ENCODE measurements at regions of chr14 and their contacts with region 1.

Region 1: GRCh38 chr14:73759714-73760597 is 45.8 kb upstream of the PNMA1 start:
- DNase-seq: peak; percentile 99
- ATAC-seq: peak; percentile 75
- H3K4me3 Mint-ChIP-seq: peak overlapping the region; percentile 87
- H3K27ac Mint-ChIP-seq: peak overlapping the region; percentile 96
- H3K4me1 Mint-ChIP-seq: peaks cover 72% of the 10 kb centered on the region
- H3K27me3 Mint-ChIP-seq: no peaks in the 10 kb centered on the region
- CTCF ChIP-seq: no peak

Region 2: GRCh38 chr14:73700325-73700724 is 59.6 kb before region 1 on chr14:
- CTCF ChIA-PET with region 1: no interaction called
- POLR2A ChIA-PET with region 1: no interaction called
- intact Hi-C with region 1: no loop called
- DNase-seq: no peak
- ATAC-seq: no peak
- H3K4me3 Mint-ChIP-seq: no peak overlapping the region
- H3K27ac Mint-ChIP-seq: no peak overlapping the region
- H3K4me1 Mint-ChIP-seq: peaks cover 30% of the 10 kb centered on the region
- H3K27me3 Mint-ChIP-seq: no peaks in the 10 kb centered on the region
- CTCF ChIP-seq: no peak

Region 3: DNA sequence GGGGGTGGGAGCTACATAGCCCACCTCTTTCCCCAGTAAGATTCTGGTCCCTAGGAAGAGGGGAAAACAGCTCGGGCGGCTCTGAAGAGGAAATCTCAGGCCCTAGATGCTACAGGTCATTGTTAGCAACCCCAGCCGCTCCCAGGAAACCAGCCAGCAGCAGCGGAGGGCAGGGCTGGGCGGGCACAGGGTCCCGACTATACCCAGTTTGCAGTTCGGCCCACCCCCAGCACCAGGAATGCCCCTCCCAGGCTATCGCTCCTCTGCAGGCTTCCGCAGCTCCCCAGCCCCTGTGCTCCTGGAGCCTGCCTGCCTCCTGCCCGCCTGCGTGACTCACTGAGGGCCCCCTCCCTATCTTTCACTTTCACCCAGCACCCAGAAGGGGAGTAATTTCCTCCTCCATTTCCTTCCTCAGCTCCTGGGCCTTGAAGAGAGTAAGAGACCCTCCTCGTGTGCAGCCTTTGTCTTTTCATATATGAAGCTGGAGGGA is 18.5 kb before region 1 on chr14:
- CTCF ChIA-PET with region 1: interaction called, 123 read pairs
- POLR2A ChIA-PET with region 1: interaction called, 236 read pairs
- intact Hi-C with region 1: loop called (anchors 2 kb)
- DNase-seq: peak; percentile 83
- ATAC-seq: peak; percentile 73
- H3K4me3 Mint-ChIP-seq: peak overlapping the region; percentile 74
- H3K27ac Mint-ChIP-seq: peak overlapping the region; percentile 98
- H3K4me1 Mint-ChIP-seq: peaks cover 71% of the 10 kb centered on the region
- H3K27me3 Mint-ChIP-seq: no peaks in the 10 kb centered on the region
- CTCF ChIP-seq: no peak

Region 4: DNA sequence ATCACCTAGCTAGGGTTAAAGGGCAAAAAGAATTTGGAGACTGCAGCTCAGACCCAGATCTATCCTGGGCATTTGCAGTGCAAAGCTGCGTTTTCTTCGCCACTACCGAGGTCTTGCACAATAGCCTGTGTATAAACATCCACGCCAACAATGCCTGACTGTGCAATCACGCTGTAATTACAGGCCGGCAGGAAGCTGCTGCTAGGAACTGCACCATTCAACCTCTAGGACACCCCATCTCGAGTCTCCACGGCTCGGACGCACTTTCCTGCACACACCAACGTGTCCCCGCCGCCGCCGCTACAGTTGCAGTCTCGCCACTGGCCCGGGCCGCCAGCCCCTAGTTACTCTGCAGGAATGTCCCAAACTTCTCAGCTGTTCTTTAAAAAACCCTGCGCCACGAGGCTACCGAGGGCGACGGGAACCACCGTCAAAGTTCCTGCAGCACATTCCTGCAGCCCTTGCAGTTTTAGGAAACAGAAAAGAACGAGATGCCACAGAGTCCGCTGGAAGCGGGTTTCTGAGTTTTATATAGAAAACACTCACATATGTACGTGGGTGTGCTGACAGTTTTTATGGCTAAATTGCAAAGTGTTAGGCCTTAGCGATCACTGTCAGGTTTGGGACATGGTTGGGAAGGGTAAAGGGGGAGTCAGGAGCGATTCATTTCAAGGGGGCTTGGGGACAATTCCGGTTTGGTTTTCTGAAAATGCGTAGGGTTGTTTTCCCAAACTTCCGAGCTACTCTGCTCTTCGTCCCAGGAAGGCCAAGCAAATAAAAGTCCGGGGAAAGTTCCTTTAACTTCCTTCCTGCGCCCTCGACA is 26.1 kb after region 1 on chr14:
- CTCF ChIA-PET with region 1: interaction called, 84 read pairs
- POLR2A ChIA-PET with region 1: interaction called, 512 read pairs
- intact Hi-C with region 1: loop called (anchors 2 kb)
- DNase-seq: peak; percentile 81
- ATAC-seq: peak; percentile 54
- H3K4me3 Mint-ChIP-seq: peak overlapping the region; percentile 90
- H3K27ac Mint-ChIP-seq: peak overlapping the region; percentile 95
- H3K4me1 Mint-ChIP-seq: peaks cover 58% of the 10 kb centered on the region
- H3K27me3 Mint-ChIP-seq: no peaks in the 10 kb centered on the region
- CTCF ChIP-seq: peak; percentile 37

Region 5: DNA sequence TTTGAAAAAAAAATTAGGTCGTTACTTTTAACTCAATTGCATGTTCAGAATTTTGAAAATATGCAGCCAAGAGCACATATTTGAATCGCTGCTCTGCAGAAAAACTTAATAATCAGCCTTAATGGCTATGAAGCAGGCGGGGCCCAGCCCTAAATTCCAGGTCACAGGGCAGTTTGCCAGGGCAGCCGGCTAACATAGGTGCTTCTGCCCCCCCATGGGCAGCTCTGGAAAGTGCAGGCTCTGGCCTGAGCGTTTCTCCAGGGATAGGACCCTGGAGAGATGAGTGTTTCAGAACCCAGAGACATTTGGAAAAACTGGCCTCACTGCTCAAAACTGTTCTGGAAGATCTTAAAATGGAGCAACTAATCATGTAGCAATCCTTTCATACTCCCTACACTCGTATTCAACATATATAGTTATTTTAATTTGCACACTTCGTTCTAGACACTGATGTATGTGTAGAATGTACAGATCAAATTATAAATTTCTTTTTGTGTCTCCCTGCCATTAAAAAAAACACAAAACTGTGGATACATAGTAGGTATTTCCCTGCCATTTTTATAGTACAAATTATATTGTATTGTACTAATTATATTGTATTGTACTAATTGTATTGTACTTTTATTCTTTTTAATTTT is 65.7 kb after region 1 on chr14:
- CTCF ChIA-PET with region 1: interaction called, 23 read pairs
- POLR2A ChIA-PET with region 1: interaction called, 3 read pairs
- intact Hi-C with region 1: no loop called
- DNase-seq: peak; percentile 88
- ATAC-seq: peak; percentile 85
- H3K4me3 Mint-ChIP-seq: no peak overlapping the region
- H3K27ac Mint-ChIP-seq: no peak overlapping the region
- H3K4me1 Mint-ChIP-seq: peaks cover 19% of the 10 kb centered on the region
- H3K27me3 Mint-ChIP-seq: no peaks in the 10 kb centered on the region
- CTCF ChIP-seq: peak; percentile 89